ENCODE measurements at regions of chr1 and their contacts with region 1.

Region 1: DNA sequence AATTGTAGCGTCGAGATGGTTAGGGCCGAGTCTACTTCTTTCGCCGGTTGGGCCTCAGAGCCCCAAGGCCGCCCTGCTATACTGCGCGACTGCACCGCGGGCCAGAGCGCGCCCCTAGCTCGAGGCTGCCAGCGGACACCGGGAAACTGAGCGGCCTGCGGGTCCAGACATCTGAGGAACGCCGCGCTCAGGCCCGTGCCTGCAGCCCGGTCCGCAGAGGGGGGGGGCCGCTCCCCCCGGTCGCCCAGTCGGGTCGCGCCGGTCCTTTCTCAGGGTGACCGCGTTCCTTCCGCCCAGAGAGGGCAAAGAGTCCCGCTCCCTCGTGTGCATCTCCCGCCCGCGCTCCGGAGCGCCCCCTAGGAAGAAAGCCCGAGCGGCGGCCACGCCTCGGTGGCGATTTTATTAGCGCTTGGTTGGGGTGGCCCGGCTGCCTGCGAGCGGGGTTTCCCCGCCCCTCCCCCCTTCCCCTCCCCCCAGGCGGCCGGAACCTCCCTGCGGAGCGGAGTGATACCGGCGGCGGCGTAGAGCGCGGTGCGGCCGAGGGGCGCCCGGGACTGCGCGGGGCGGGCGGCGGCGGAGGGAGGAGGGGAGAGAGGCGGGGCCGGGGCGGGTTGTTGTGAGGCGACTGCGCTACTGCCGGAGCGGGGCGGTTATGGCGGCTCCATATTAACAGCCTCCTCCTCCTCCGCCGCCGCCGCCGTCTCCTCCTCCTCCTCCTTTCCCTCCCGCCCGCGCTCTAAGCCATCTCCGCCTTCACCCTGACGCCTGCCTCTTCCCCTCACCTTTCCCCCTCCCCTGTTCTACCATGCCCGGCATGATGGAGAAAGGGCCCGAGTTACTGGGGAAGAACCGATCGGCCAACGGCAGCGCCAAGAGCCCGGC is at the start of gene RCOR3:
- DNase-seq: peak; percentile 92 to 98
- H3K4me3 ChIP-seq: peak within 1 kb of the TSS; percentile 94 to 99
- H3K27ac ChIP-seq: peak within 1 kb of the TSS; percentile 100
- H3K4me1 ChIP-seq: peaks cover 0 to 26% (median 18%) of the 10 kb centered on the region in 4 donors
- H3K27me3 ChIP-seq: no peaks in the 10 kb centered on the region
- CTCF ChIP-seq: peak; percentile 30 to 39

Region 2: DNA sequence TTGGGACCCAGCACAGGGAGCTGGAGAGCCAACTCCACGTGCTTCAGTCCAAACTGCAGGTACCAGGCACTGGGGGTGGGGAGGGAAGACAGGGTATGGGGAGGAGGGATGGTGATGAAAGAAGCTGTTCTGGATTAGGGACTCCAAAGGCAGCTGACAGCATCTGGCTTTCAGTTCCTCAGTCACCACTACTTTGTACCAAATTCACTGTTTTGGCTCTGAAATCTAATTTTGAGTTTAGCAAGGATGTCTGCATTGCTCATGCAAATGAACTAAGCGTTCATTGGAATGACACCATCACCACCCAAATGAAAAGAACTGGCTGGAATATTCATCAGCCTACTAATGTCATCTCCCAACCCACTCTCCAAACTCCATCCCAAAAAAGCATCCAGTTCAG is 1483.3 kb before region 1 on chr1:
- intact Hi-C with region 1: loop called (anchors 5 kb)
- DNase-seq: no peak
- H3K4me3 ChIP-seq: no peak overlapping the region
- H3K27ac ChIP-seq: no peak overlapping the region
- H3K4me1 ChIP-seq: peaks cover 0 to 4% (median 0%) of the 10 kb centered on the region in 4 donors
- H3K27me3 ChIP-seq: no peaks in the 10 kb centered on the region
- CTCF ChIP-seq: no peak

Region 3: GRCh38 chr1:211382714-211383480 is 123.9 kb after region 1 on chr1:
- intact Hi-C with region 1: loop called (anchors 10 kb)
- DNase-seq: peak; percentile 90 to 96
- H3K4me3 ChIP-seq: peak overlapping the region; percentile 66 to 79
- H3K27ac ChIP-seq: peak overlapping the region; percentile 92 to 96
- H3K4me1 ChIP-seq: peaks cover 0 to 5% (median 2%) of the 10 kb centered on the region in 4 donors
- H3K27me3 ChIP-seq: no peaks in the 10 kb centered on the region
- CTCF ChIP-seq: no peak

Measured in tibial artery (tissue), 4 donors.